Esophagus muscularis mucosa (tissue), 4 donors: ENCODE measurements at regions of chr12 and their contacts with region 1.

Region 1: DNA sequence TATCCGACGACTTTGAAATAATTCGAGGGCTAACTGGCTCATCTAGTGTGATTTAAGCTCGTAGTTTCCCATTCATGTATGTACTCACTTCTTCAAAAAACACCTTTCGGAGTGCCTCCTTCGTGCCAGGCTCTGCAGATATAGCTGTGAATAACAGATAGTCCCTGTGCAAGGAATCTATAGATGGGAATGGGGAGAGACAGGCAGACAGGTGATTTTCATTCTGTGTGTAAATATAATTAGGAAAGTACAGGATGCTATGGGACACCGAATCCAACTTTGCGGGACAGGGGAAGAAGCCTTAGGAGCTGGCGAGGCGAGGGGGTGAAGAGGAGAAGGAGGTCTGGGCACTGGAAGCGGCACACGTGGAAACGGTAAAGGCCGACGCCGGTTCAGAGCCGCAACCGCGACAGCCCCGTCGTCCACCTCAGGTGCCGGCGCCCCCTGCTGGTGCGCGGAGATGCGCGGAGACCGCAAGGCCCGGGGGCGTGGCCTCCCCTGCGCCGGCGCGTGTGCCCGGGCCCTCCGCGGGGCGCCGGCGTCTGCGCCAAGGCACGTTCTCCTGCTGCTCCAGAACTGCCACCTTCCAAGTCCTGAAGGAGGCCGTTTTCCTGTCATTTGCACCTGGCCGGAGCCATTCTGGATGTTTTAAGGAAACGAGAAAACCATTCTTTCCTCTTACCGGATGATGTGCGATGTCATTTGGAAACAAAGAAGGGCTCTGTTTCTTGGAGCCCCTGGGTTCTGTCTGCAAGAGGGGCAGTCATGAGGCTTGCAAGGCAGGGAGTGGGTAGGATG is 18.0 kb upstream of the CACNA1C start:
- DNase-seq: peak; percentile 94
- H3K4me3 ChIP-seq: peak overlapping the region; percentile 42 to 49 (median 44)
- H3K27ac ChIP-seq: peak overlapping the region in 2 of 4 donors; percentile 52 to 53
- H3K4me1 ChIP-seq: peaks cover 18 to 37% (median 25%) of the 10 kb centered on the region in 4 donors
- H3K27me3 ChIP-seq: no peaks in the 10 kb centered on the region
- CTCF ChIP-seq: peak in 2 of 3 experiments; percentile 97
- EP300 ChIP-seq: no peak
- POLR2A ChIP-seq: no peak

Region 2: GRCh38 chr12:1795785-1796514 is 238.9 kb before region 1 on chr12:
- intact Hi-C with region 1: loop called (anchors 2 kb)
- DNase-seq: peak; percentile 97
- H3K4me3 ChIP-seq: peak overlapping the region; percentile 56 to 73 (median 66)
- H3K27ac ChIP-seq: peak overlapping the region; percentile 77 to 87 (median 86)
- H3K4me1 ChIP-seq: peaks cover 37 to 51% (median 46%) of the 10 kb centered on the region in 4 donors
- H3K27me3 ChIP-seq: no peaks in the 10 kb centered on the region
- CTCF ChIP-seq: peak; percentile 98 to 100 (median 99)
- EP300 ChIP-seq: no peak
- POLR2A ChIP-seq: no peak

Region 3: DNA sequence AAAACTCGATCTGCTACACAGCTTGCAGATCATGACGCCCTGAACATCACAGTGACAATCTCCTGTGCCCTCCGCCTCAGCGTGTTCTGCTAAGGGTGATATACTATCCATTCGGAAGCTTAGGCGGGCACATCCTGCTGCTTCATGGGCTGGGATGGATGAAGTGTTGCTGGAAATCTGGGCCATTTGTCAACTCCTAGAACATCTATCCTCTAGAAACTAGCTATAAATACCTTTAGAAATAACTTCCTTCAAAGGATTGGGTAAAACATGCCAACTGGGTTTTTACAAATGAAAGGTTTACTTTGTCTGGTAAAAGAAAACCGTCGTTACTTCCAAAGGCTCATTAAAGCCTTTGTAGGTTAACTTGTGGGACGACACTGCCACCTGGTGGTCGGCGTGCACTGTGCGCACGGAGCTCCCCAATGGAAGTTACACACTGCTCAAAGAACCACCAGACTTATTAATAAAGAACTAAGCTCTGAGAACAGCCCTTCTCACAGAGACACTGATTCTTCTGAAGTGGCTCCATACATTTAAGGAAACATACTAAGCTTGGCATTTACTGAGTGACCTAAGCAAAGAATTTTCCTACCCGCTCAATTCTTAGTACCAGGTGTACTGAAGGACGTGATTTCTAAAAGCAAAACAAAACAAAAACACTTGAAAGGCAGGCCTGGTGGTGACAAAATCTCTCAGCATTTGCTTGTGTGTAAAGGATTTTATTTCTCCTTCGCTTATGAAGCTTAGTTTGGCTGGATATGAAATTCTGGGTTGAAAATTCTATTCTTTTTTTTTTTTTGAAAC is 94.8 kb before region 1 on chr12:
- intact Hi-C with region 1: loop called (anchors 5 kb)
- DNase-seq: peak; percentile 98
- H3K4me3 ChIP-seq: peak overlapping the region; percentile 5 to 32 (median 18)
- H3K27ac ChIP-seq: peak overlapping the region; percentile 59 to 78 (median 71)
- H3K4me1 ChIP-seq: peaks cover 15 to 56% (median 43%) of the 10 kb centered on the region in 4 donors
- H3K27me3 ChIP-seq: no peaks in the 10 kb centered on the region
- CTCF ChIP-seq: peak; percentile 95 to 99 (median 99)
- EP300 ChIP-seq: no peak
- POLR2A ChIP-seq: no peak